A549 (cell line): ENCODE measurements at regions of chr4 and their contacts with region 1.

Region 1: GRCh38 chr4:163548481-163549243 is 54.2 kb downstream of the TMA16 start:
- DNase-seq: peak; percentile 32 to 57
- ATAC-seq: peak; percentile 73 to 75; a peak in 5 of 6 replicates
- H3K4me3 ChIP-seq: no peak overlapping the region
- H3K27ac ChIP-seq: no peak overlapping the region
- H3K4me1 ChIP-seq: no peaks in the 10 kb centered on the region
- CTCF ChIP-seq: peak; percentile 66
- EP300 ChIP-seq: no peak
- POLR2A ChIP-seq: no peak
- RAD21 ChIP-seq: peak; percentile 69 to 78

Region 2: DNA sequence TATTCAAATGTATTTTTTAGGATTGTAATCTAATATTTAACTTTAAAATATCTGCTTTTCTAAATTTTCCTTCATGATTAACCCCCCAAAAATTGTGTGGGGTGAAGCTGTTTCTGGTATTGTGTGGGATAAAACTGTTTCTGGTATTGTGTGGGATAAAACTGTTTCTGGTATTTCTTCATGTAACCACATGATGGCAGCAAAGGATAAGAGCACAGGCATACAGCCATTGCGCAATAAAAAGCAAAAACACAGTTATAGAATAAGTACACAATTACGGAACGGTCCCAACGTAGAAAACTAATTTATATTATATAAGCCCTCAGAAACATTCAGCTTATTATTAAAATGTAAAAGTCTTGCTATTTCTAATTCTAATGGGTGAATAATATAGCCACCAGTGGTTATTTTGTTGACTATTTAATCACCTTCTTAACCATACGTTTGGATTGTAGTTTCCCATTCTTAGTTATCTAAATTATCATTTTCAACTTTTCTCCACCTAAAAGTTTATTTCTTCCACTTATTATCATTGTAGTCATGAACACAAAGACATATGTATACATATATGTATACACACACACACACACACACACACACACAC is 1051.0 kb before region 1 on chr4:
- CTCF ChIA-PET with region 1: interaction called, 12 read pairs
- POLR2A ChIA-PET with region 1: no interaction called
- DNase-seq: peak; percentile 5 to 26
- ATAC-seq: peak in 1 of 2 experiments; percentile 66; a peak in 2 of 6 replicates
- H3K4me3 ChIP-seq: no peak overlapping the region
- H3K27ac ChIP-seq: no peak overlapping the region
- H3K4me1 ChIP-seq: no peaks in the 10 kb centered on the region
- CTCF ChIP-seq: peak; percentile 85
- EP300 ChIP-seq: no peak
- POLR2A ChIP-seq: no peak
- RAD21 ChIP-seq: peak; percentile 90 to 95

Region 3: GRCh38 chr4:163191999-163192398 is 356.7 kb before region 1 on chr4:
- CTCF ChIA-PET with region 1: no interaction called
- POLR2A ChIA-PET with region 1: no interaction called
- DNase-seq: peak in 1 of 2 experiments; percentile 3
- ATAC-seq: 0 out of 6 replicates have a peak, but pooled peaks of 1 of the 2 experiments have one; percentile 34
- H3K4me3 ChIP-seq: no peak overlapping the region
- H3K27ac ChIP-seq: no peak overlapping the region
- H3K4me1 ChIP-seq: no peaks in the 10 kb centered on the region
- CTCF ChIP-seq: 0 out of 3 replicates have a peak, but pooled peaks have one; percentile 14
- EP300 ChIP-seq: no peak
- POLR2A ChIP-seq: no peak
- RAD21 ChIP-seq: peak in 1 of 2 experiments; percentile 44; a peak in 2 of 5 replicates

Region 4: GRCh38 chr4:163484906-163485305 is 63.8 kb before region 1 on chr4:
- CTCF ChIA-PET with region 1: interaction called, 28 read pairs
- POLR2A ChIA-PET with region 1: no interaction called
- DNase-seq: peak; percentile 10 to 49
- ATAC-seq: peak; percentile 54 to 76; a peak in 4 of 6 replicates
- H3K4me3 ChIP-seq: no peak overlapping the region
- H3K27ac ChIP-seq: no peak overlapping the region
- H3K4me1 ChIP-seq: no peaks in the 10 kb centered on the region
- CTCF ChIP-seq: peak; percentile 55
- EP300 ChIP-seq: no peak
- POLR2A ChIP-seq: no peak
- RAD21 ChIP-seq: peak; percentile 56 to 69

Region 5: GRCh38 chr4:163494360-163495162 is 54.1 kb before region 1 on chr4 and contains the start of gene TMA16:
- CTCF ChIA-PET with region 1: interaction called, 6 read pairs
- POLR2A ChIA-PET with region 1: interaction called, 14 read pairs
- DNase-seq: peak; percentile 66 to 95
- ATAC-seq: peak; percentile 95 to 96
- H3K4me3 ChIP-seq: peak within 1 kb of the TSS; percentile 91
- H3K27ac ChIP-seq: peak within 1 kb of the TSS; percentile 98 to 99
- H3K4me1 ChIP-seq: peaks cover 12% of the 10 kb centered on the region; the same call in 2 of the 3 replicates
- CTCF ChIP-seq: no peak
- EP300 ChIP-seq: no peak
- POLR2A ChIP-seq: peak; percentile 68
- RAD21 ChIP-seq: no peak
- polyA plus RNA-seq, gene TMA16: 14.2 and 28.5 TPM in 2 replicates

Region 6: GRCh38 chr4:163624727-163625126 is 76.1 kb after region 1 on chr4:
- CTCF ChIA-PET with region 1: no interaction called
- POLR2A ChIA-PET with region 1: no interaction called
- DNase-seq: no peak
- ATAC-seq: no peak
- H3K4me3 ChIP-seq: no peak overlapping the region
- H3K27ac ChIP-seq: no peak overlapping the region
- H3K4me1 ChIP-seq: no peaks in the 10 kb centered on the region
- CTCF ChIP-seq: no peak
- EP300 ChIP-seq: no peak
- POLR2A ChIP-seq: no peak
- RAD21 ChIP-seq: no peak

Region 7: DNA sequence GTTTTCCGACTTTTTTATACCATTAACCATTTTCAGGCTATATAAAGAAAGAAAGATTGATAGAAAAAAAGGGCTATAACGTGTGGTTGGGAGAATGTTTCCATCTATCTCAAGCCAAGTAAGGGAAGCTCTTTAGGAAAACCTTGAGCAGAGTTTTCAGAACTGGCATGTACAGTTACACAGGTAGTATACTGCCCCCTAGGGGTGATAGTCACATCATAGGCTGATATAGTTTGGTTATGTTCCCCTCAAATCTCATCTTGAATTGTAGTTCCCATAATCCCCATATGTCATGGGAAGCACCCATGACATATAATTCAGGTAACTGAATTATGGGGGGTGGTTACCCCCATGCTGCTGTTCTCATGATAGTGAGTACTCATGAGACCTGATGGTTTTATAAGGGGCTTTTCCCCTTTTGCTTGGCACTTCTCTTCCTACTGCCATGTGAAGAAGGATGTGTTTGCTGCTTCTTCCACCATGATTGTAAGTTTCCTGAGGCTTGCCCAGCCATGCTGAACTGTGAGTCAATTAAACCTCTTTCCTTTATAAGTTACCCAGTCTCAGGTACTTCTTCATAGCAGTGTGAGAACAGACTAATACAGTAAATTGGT is 132.7 kb after region 1 on chr4:
- CTCF ChIA-PET with region 1: interaction called, 11 read pairs
- POLR2A ChIA-PET with region 1: no interaction called
- DNase-seq: peak in 1 of 2 experiments; percentile 25
- ATAC-seq: peak in 1 of 2 experiments; percentile 56; a peak in 2 of 6 replicates
- H3K4me3 ChIP-seq: no peak overlapping the region
- H3K27ac ChIP-seq: no peak overlapping the region
- H3K4me1 ChIP-seq: no peaks in the 10 kb centered on the region
- CTCF ChIP-seq: peak; percentile 31; the same call in 1 of the 3 replicates
- EP300 ChIP-seq: no peak
- POLR2A ChIP-seq: no peak
- RAD21 ChIP-seq: peak in 1 of 2 experiments; percentile 32; a peak in 1 of 5 replicates

Region 8: DNA sequence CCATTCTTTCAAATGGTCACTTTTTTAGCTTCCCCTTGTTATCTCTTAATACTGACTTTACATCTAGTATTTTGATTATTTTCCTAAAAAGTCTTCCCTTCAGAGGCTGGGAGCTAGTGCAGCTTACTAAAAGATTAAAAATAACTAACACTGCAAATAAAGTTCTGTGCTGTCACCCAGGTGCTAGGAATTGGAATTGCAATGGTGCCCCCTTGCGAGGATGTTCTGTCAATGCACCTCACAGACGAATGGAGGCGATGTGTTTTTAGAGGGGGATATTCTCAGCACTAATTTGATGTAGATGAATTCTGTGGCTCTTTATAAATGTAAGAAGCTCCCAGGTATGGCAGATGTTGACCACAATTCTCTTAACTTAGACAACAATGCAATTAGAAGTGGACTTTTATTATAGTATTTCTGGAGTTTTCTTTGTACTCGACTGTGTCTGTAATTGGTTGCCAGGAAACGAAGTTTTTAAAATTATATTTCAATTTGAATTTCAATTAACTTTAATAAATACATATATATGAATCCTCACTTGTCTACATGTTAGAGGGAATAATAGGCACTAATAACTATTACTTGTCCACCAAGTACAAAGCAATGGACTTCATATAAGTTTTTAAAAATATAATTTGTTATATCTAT is 1183.3 kb after region 1 on chr4:
- CTCF ChIA-PET with region 1: interaction called, 24 read pairs
- POLR2A ChIA-PET with region 1: no interaction called
- DNase-seq: peak; percentile 25 to 31
- ATAC-seq: peak in 1 of 2 experiments; percentile 69; a peak in 2 of 6 replicates
- H3K4me3 ChIP-seq: no peak overlapping the region
- H3K27ac ChIP-seq: no peak overlapping the region
- H3K4me1 ChIP-seq: no peaks in the 10 kb centered on the region
- CTCF ChIP-seq: peak; percentile 70
- EP300 ChIP-seq: no peak
- POLR2A ChIP-seq: no peak
- RAD21 ChIP-seq: peak; percentile 72 to 73